Activated CD4-positive, alpha-beta T cell treated with anti-CD3 and anti-CD28 coated beads, Interleukin-2, amount 10 ng/mL, durations not matched to agents 24 days and 14 days (primary cell): ENCODE measurements at regions of chrX and their contacts with region 1.

Region 1: DNA sequence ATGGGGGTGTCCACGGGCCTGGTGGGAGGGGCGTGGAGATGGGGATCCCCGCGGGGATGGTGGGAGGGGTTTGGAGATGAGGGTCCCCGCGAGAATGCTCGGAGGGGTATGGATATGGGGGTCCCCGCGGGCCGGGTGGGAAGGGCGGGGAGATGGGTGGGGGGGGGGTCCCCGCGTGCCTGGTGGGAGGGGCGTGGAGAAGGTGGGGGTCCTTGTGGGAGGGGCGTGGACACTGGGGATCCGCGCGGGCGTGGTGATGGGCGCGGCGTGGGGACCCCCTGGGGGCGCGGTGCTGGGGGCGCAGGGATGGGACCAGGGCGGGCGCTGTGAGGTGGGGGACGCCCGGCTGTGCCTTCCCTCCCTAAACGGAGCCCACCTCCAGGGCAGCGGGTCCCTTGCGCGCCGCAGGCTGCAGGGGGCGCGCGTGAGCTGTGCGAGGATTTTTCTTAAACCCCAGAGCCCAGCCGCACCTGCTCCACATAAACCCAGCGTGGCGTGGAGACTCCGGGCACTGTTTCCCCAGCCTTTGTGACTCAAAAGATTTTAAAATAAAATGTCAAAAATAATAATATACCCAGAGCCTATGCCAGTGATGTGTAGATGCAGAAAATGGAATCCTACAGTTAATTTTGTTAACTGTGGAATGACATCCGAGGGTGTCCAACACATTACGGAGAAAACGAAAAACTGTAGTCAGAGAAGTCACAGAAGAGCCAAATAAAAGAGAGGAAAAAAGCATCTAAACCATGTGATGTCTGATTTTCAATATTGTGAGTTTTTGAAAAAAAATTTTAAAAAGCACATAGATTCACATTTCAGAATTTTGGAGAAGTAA is 1.5 kb upstream of the ASMTL start:
- DNase-seq: peak; percentile 97
- H3K4me3 Mint-ChIP-seq: peak overlapping the region; percentile 69
- H3K27ac Mint-ChIP-seq: peak overlapping the region; percentile 67
- H3K4me1 Mint-ChIP-seq: peaks cover 16% of the 10 kb centered on the region
- H3K27me3 Mint-ChIP-seq: no peaks in the 10 kb centered on the region

Region 2: DNA sequence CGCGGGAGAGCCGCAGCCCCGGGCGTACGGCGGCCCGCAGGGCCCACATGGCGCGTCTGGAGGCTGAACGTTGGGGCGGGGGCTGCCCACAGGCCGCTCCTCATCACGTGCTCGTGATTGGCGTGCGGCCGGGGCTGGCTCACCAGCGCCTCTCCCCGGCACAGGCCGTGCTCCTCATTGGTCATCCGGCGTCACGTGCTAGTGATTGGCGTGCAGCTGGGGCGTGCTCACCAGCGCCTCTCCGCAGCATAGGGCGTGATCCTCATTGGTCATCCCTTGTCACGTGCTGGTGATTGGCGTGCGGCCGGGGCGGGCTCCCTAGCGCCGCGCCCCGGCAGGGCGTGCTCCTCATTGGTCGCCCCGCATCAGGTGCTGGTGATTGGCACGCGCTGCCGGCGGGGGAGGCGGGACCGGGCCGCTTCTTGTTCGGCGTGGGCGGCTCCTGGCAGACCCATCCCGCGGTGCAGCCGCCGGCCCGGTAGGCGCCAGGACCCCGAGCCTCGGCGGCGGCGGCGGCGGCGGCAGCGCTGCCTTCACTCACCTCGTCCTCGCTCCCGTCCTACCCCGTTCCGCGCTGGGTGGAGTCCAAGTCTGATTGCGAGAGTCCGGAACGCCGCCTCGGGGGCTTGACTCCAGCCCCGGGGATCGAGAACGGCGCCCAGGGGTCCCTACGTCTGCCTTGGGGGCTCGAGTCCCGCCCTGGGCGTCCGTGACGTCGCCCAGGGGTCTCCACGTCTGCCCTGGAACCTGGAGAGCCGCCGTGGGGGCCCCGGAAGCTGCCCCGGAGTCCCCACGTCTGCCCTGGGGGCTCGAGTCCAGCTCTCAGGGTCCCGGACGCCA is 1135.2 kb before region 1 on chrX and contains the start of gene GTPBP6:
- intact Hi-C with region 1: loop called (anchors 2 kb)
- DNase-seq: peak; percentile 100
- H3K4me3 Mint-ChIP-seq: peak within 1 kb of the TSS; percentile 96
- H3K27ac Mint-ChIP-seq: peak within 1 kb of the TSS; percentile 97
- H3K4me1 Mint-ChIP-seq: peaks cover 23% of the 10 kb centered on the region
- H3K27me3 Mint-ChIP-seq: peaks cover 4% of the 10 kb centered on the region
- total RNA-seq, gene GTPBP6: 66.3 and 70.5 TPM in 2 replicates

Region 3: DNA sequence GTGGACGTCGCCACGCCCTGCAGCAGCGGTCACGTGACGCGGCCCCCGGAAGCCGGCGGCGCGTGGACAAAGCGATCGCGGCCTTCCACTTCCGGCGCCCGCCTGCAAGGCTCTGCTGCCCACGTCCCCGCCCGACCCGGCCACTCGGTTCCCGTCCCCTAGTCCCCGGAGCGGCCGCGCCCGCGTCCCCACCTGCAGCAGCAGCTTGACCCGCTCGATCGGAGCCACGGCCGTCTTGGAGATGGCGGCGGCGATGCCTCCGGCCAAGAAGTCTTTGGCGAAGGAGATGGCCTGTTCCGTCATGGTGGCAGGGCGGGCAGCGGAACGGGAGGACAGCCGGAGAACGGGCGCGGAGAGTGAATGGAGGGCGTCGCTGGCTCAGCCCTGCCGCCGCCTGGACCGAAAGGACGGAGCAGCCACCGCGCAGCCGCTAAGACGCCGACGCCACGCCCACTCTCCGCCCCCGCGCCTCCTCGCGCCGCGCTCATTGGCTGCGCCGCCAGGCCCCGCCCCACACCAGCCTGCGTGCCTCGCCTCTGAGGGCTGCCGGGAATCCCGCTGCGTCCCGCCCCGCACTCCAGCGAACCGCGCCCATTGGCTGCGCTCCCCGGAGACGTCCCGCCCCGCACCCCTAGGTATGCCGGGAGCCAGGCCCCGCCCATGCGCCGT is 62.3 kb before region 1 on chrX and contains the start of gene SLC25A6:
- intact Hi-C with region 1: loop called (anchors 1 kb)
- DNase-seq: peak; percentile 100
- H3K4me3 Mint-ChIP-seq: peak within 1 kb of the TSS; percentile 97
- H3K27ac Mint-ChIP-seq: peak within 1 kb of the TSS; percentile 98
- H3K4me1 Mint-ChIP-seq: peaks cover 36% of the 10 kb centered on the region
- H3K27me3 Mint-ChIP-seq: no peaks in the 10 kb centered on the region
- total RNA-seq, gene SLC25A6: 302 and 306 TPM in 2 replicates

Region 4: GRCh38 chrX:1481636-1482529 is 27.7 kb after region 1 on chrX:
- intact Hi-C with region 1: loop called (anchors 2 kb)
- DNase-seq: peak; percentile 94
- H3K4me3 Mint-ChIP-seq: peak overlapping the region; percentile 94
- H3K27ac Mint-ChIP-seq: peak overlapping the region; percentile 99
- H3K4me1 Mint-ChIP-seq: peaks cover 63% of the 10 kb centered on the region
- H3K27me3 Mint-ChIP-seq: no peaks in the 10 kb centered on the region

Region 5: DNA sequence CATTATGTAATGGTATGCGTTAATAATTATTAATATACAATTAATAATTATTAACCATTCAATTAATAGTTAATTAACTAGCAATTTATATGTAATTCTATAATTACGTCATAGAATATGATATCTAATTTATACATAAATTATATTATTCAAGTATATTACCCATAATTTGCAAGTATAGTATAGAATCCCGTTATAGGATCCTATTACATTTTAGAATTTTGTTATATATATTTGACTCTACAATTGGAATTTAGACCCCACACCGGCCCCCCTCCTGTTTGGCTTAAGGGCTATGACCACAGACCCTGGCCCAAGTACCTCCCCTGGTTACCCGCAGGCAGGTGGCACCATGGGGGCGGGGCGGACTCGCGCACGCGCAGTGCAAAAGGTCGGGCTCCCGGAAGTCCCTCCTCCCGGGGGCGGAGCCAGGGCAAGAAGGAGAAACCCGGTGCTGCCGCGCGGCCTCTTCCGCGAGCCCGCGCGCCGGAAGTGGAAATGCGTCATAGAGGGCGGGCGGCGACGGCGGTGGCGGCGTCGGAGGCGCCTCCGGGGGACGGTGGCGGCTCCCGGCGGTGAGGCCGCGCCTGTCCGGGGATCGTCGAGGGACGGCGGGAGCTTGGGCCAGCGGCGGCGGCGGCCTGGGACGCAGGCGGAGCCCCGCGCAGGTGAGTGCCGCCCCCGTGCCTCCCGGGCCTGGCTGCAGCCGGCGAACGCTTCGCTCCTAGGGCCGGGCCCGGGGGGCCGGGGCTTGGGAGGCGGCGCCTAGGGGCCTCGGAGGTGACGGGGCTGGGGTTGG is 137.1 kb after region 1 on chrX and contains the start of gene AKAP17A:
- intact Hi-C with region 1: loop called (anchors 1 kb)
- DNase-seq: peak; percentile 100
- H3K4me3 Mint-ChIP-seq: peak within 1 kb of the TSS; percentile 97
- H3K27ac Mint-ChIP-seq: peak within 1 kb of the TSS; percentile 93
- H3K4me1 Mint-ChIP-seq: peaks cover 22% of the 10 kb centered on the region
- H3K27me3 Mint-ChIP-seq: no peaks in the 10 kb centered on the region
- total RNA-seq, gene AKAP17A: 59.6 and 62.0 TPM in 2 replicates

Region 6: GRCh38 chrX:2608638-2609430 is 1154.7 kb after region 1 on chrX:
- intact Hi-C with region 1: loop called (anchors 1 kb)
- DNase-seq: peak; percentile 97
- H3K4me3 Mint-ChIP-seq: peak overlapping the region; percentile 95
- H3K27ac Mint-ChIP-seq: peak overlapping the region; percentile 93
- H3K4me1 Mint-ChIP-seq: peaks cover 46% of the 10 kb centered on the region
- H3K27me3 Mint-ChIP-seq: no peaks in the 10 kb centered on the region